ENCODE measurements at regions of chr2 and their contacts with region 1.

Region 1: DNA sequence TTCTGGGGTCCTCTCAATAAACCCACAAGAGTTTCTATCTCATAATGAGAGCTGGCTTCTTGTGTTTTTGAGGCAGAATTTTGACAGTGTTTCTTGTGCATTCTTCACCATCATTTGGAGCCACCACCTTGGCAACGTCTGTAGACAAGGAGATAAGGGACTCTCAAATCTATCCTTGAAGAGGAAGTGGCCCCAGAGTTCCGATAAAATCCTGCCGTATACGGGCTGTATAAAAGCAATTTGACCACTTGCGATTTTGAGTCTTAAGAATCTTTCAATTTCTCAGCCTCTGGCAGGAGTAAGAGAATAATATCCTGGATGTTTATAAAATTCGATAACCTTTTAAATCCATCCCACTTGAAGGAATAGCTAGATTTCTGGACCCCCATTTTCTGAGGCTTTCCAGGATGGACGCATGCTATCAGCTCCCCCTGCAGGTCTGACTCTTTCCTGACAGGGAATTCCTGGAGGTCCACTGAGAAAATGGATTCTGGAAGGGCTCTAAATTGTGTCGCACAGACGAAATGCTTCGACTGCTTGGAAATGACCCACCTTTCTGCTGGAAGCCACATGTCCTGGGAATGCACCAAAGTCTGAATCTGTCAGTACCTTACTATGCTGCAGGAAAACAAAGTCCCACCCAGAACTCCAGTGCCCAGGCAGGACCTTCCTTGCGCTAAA is 54.1 kb downstream of the E2F6 start:
- DNase-seq: peak; percentile 74
- ATAC-seq: peak; percentile 78

Region 2: DNA sequence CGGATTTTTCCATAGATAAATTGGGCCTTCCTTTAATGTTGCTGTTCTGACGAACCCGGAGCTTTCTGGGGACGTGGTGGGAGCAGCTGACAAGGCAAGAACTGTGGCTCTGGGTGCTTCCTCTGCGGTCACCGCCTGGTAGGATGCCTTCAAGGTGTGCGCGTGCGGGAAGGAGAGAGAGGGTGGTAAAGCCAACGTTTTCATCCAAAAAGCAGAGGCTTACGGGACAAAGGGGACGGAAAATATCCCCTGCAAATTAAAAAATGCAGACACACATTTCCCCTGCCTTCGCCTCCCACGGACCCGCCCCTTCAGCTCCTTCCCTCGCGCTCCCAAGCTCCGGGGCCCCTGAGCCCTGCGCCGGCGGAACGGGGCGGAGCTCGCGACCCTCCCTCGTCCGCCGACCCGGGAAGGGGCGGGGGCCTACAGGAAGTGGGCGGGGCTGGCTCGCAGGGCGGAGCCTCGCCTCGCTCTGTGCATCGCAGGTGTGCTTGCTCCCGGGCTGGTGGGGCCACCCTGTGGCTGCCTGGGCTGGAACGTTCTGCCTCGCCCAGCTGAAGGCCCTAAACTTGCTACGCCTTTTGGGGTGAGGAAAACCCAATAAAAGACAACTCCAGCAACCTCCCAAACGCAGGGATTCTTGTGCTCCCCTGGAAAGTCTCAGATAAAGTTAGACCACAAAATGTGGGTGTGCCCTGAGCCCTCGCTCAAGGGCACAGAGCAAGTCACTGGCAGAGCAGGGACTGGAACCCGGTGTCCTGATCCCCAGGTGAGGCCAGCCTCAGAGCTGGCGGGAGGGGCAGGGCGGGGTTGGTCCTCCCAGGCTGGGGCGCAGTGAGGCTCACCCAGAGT is 282.1 kb before region 1 on chr2:
- intact Hi-C with region 1: loop called (anchors 10 kb)
- DNase-seq: peak; percentile 75
- ATAC-seq: peak; percentile 37

Region 3: DNA sequence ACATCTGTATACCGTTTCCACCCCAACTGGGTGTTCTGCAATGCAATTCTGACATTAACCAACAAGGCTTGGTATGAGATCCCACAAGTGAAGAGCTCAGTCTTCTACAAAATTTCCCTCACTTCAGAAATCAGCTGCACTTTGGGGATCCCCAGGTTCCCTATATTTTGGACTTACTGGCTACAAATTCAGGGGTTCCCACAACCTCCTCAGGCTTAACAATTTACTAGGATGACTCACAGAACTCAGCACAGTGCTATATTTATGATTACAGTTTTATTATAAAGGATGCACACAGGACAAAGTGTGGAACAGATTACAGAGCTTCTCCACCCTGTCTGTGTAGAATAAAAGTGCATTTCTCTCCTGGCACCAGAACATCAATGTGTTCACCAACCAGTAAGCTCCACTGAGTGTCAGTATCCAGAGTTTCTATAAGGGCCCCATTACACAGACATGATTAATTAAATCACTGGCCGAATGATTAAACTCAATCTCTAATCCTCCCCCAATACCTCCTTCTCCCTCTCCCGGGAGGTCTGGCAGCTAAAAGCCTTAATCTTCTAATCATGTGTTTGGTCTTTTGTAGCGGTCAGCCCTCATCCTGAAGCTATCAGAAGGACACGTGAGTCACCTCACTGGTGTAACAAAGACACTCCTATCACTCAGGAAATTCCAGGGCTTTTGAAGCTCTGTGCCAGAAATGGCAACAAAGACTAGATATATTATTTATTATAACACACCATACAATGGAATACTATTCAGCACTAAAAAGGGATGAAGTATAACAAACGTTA is 172.0 kb before region 1 on chr2:
- intact Hi-C with region 1: loop called (anchors 10 kb)
- DNase-seq: no peak
- ATAC-seq: no peak

Region 4: DNA sequence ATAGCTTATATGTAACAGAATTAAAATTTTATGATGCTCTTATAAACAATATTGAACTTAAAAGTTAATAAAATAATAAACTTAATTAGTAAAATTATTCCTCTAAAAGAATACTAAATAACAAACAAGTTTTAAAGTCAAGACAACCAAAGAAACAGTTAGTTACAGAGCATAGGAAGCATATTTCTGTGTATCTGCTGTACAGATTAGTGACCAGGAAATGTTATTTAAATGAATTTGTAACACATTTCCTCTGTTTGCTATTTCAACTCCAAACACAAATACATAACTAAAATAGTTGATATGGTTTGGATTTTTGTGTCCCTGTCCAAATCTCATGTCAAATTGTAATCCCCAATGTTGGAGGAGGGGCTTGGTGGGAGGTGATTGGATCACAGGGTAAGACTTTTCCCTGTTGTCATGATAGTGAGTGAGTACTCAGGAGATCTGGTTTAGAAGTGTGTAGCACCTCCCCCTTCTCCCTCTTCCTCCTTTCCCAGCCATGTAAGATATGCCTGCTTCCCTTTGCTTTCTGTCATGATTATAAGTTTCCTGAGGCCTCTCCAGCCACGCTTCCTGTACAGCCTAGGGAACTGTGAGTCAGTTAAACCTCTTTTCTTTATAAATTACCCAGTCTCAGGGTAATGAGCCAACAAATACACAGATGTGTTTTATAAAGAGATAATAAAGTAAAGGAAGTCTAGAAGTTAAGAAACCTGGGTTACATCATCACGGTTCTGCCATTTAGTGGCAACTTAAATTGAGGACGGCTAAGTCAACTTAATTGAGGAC is 119.2 kb before region 1 on chr2:
- intact Hi-C with region 1: no loop called
- DNase-seq: no peak
- ATAC-seq: no peak

Region 5: GRCh38 chr2:11319939-11320338 is 92.0 kb before region 1 on chr2:
- intact Hi-C with region 1: no loop called
- DNase-seq: no peak
- ATAC-seq: no peak

Region 6: GRCh38 chr2:11967946-11968465 is 556.1 kb after region 1 on chr2:
- intact Hi-C with region 1: no loop called
- DNase-seq: no peak
- ATAC-seq: no peak

Measured in sciatic nerve (tissue), 2 donors.